Endothelial cell of umbilical vein (primary cell): ENCODE measurements at regions of chr10 and their contacts with region 1.

Region 1: DNA sequence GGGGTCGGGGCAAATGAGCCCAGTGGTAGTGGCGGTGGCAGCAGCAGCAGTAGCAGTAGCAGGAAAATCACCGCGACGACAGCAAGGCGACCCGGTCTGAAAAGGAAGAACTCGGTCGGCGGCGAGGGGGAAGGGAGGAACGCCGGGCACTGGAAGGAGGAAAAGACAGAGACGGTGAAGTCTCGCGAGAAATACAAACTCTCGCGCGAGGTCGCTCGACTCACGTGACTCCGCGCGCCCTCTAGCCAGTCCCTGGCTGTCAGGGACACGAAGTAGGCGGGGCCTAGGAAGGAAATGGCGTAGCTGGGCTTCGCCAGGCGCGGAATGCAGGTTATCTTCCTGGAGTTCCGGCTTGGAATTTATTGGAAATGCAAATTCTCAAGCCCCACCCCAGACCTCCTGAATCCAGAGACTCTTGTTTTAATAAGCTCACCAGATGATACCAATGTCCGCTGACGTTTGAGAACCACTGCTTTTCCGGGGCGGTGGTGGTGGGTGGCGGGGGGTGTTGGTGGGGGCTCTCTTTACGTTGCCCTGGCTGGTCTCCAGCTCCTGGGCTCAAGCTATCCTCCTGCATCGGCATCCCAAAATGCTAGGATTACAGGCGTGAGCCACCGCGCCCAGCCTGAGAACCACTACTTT is at the start of gene SMNDC1:
- DNase-seq: peak; percentile 99
- H3K4me3 ChIP-seq: peak within 1 kb of the TSS; percentile 95 to 99 (median 99)
- H3K27ac ChIP-seq: peak within 1 kb of the TSS; percentile 97
- H3K4me1 ChIP-seq: peaks cover 47% of the 10 kb centered on the region
- H3K27me3 ChIP-seq: no peaks in the 10 kb centered on the region
- CTCF ChIP-seq: no peak
- POLR2A ChIP-seq: peak; percentile 51
- total RNA-seq, gene SMNDC1: 38.5 and 39.3 TPM in 2 replicates

Region 2: GRCh38 chr10:109706026-109706560 is 598.8 kb before region 1 on chr10:
- CTCF ChIA-PET with region 1: no interaction called
- POLR2A ChIA-PET with region 1: no interaction called
- dilution Hi-C with region 1: no loop called
- intact Hi-C with region 1: no loop called
- DNase-seq: no peak
- H3K4me3 ChIP-seq: no peak overlapping the region
- H3K27ac ChIP-seq: no peak overlapping the region
- H3K4me1 ChIP-seq: no peaks in the 10 kb centered on the region
- H3K27me3 ChIP-seq: no peaks in the 10 kb centered on the region
- CTCF ChIP-seq: no peak
- POLR2A ChIP-seq: no peak

Region 3: DNA sequence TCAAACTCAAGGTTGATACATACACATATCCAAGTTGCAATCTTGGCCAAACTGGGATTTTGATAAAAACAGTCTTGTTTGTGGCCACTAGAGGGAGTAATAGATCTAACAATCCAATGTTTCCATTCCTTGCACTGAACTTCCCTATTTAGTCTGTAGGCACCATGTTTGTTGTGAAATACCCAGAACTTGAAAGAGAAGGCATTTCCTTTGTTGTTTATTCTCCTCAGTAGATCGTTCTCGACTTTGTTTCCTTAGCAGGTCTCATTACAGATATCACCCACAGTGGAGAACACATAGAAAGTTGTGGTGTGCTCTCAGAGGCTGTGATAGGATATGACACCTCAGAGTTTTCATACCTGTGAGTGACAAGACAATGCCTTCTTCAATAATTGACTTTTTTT is 167.8 kb before region 1 on chr10:
- CTCF ChIA-PET with region 1: interaction called, 5 read pairs
- POLR2A ChIA-PET with region 1: no interaction called
- dilution Hi-C with region 1: no loop called
- intact Hi-C with region 1: loop called (anchors 1 kb)
- DNase-seq: peak; percentile 74
- H3K4me3 ChIP-seq: no peak overlapping the region
- H3K27ac ChIP-seq: no peak overlapping the region
- H3K4me1 ChIP-seq: peaks cover 14% of the 10 kb centered on the region
- H3K27me3 ChIP-seq: no peaks in the 10 kb centered on the region
- CTCF ChIP-seq: peak; percentile 49 to 53
- POLR2A ChIP-seq: no peak

Region 4: DNA sequence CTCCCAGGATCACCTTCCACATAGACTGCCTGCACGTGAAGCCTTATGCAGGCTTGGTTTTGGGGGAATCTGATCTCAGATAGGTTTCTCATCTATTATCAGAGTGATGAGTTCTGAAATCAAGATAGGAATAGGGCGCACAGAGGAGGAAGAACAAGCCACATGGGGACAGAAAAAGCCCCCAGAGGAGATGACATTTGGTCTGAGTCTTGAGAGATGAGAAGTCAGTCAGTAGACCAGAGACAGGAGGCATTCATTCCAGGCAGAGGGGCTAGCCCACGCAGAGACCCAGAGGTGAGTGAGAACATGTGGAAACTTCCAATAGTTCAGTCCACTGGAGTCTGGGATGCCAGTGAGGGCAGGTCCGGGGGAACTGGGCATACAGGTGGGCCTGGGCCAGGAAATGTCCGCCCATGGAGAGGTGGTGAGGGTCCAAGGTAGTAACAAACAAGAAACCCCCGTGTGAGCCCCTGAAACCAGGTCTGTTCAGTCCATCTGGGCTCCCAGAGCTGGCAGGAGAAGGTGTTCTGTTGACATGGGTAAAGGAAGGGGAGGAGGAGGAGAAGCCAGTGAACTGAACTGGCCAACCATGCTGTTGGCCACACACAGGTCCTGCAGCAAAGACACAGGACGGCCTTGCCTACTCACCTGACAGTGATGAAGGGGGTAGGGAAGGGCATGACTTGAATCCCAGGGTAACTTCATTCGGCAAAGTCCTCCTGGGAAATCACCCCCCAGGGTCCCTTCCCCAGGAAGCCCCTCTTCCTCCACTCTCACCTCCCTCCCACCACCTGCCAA is 69.2 kb after region 1 on chr10:
- CTCF ChIA-PET with region 1: no interaction called
- POLR2A ChIA-PET with region 1: no interaction called
- dilution Hi-C with region 1: no loop called
- intact Hi-C with region 1: no loop called
- DNase-seq: no peak
- H3K4me3 ChIP-seq: no peak overlapping the region
- H3K27ac ChIP-seq: no peak overlapping the region
- H3K4me1 ChIP-seq: peaks cover 22% of the 10 kb centered on the region
- H3K27me3 ChIP-seq: no peaks in the 10 kb centered on the region
- CTCF ChIP-seq: no peak
- POLR2A ChIP-seq: no peak

Region 5: DNA sequence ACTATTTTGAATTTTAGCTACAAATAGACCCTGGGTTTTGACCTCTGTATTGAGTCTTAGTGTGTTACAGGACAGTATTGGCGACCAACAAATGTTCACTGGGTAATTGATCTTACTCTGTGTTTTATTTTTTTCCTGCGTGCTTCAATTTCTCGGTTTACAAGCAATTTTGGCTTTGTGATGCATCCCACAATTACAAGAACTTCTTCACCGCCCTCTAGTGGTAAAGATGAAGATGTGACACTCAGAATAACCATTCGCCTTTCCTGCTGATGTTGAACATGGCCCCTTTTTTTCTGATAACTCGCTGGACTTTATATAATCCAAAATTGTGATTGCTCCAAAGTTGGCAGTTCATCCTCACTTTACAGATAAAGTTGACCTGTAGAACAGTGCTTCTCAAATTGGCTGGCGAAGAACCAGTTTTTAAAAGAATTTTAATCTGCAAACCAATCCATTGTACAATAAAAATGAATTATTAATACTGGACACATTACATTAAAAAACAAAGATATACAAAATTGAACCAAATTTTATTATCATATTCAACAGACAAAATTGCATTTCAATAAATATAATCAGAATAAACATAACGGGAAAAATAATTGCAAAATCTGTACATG is 242.3 kb after region 1 on chr10:
- CTCF ChIA-PET with region 1: interaction called, 49 read pairs
- POLR2A ChIA-PET with region 1: interaction called, 3 read pairs
- dilution Hi-C with region 1: no loop called
- intact Hi-C with region 1: loop called (anchors 1 kb)
- DNase-seq: peak; percentile 61
- H3K4me3 ChIP-seq: no peak overlapping the region
- H3K27ac ChIP-seq: no peak overlapping the region
- H3K4me1 ChIP-seq: peaks cover 13% of the 10 kb centered on the region
- H3K27me3 ChIP-seq: peaks cover 1 to 4% of the 10 kb centered on the region in 2 experiments
- CTCF ChIP-seq: peak; percentile 63 to 68
- POLR2A ChIP-seq: no peak

Region 6: DNA sequence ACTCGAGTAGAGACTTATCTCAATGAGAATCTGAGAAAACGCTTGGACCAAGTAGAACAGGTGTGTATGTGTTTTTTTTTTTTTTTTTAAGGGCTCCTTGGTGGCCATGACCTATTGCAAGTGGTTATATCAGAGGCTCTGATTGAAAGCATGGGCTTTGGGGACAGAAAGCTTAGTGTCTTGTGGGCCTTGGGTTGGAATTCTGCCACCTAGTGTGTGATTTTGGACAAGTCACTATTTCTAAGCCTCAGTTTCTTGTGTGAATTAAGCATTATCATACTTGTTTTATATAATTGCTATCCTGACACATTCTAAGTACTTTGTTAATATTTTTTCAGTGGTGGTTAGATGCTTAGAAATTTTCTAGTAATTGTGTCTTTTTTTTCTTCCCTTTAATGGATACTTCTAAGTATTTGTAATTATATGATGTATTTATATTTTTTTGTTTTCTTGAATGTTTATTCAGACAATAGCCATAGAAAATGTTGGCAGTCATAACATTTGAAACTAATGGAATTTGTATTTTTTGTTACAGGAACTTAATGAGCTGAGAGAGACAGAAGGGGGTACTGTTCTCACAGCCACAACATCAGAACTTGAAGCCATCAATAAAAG is 295.7 kb after region 1 on chr10:
- CTCF ChIA-PET with region 1: interaction called, 80 read pairs
- POLR2A ChIA-PET with region 1: no interaction called
- dilution Hi-C with region 1: no loop called
- intact Hi-C with region 1: loop called (anchors 1 kb)
- DNase-seq: peak; percentile 80
- H3K4me3 ChIP-seq: no peak overlapping the region
- H3K27ac ChIP-seq: no peak overlapping the region
- H3K4me1 ChIP-seq: peaks cover 6% of the 10 kb centered on the region
- H3K27me3 ChIP-seq: no peaks in the 10 kb centered on the region
- CTCF ChIP-seq: peak; percentile 42 to 59
- POLR2A ChIP-seq: no peak

Region 7: DNA sequence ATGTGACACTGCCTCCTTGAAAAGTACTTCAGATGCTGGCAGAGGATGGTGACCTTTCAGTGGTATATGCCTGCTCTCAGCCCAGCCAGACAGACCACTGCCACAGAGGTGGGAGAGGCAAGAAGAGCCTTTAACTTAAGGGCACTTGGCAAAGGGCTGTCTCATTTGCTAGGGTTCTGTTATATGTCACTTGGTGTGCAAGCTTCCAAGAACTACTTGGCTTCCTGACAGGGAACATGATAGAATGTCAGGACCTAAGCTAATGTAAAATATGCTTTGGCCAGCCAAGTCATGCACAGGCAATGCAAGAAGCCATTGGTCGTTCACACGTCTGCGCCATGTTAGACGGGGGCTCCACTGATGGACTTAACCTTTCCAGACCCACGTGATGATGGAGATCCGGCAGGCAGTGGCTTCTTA is 393.9 kb after region 1 on chr10:
- CTCF ChIA-PET with region 1: no interaction called
- POLR2A ChIA-PET with region 1: no interaction called
- dilution Hi-C with region 1: no loop called
- intact Hi-C with region 1: no loop called
- DNase-seq: no peak
- H3K4me3 ChIP-seq: no peak overlapping the region
- H3K27ac ChIP-seq: no peak overlapping the region
- H3K4me1 ChIP-seq: no peaks in the 10 kb centered on the region
- H3K27me3 ChIP-seq: peaks cover 0 to 5% of the 10 kb centered on the region in 2 experiments
- CTCF ChIP-seq: no peak
- POLR2A ChIP-seq: no peak

Region 8: GRCh38 chr10:110871298-110872084 is 566.6 kb after region 1 on chr10 and contains the start of gene PDCD4:
- CTCF ChIA-PET with region 1: no interaction called
- POLR2A ChIA-PET with region 1: no interaction called
- dilution Hi-C with region 1: no loop called
- intact Hi-C with region 1: loop called (anchors 5 kb)
- DNase-seq: peak; percentile 99
- H3K4me3 ChIP-seq: peak within 1 kb of the TSS; percentile 55 to 96 (median 85)
- H3K27ac ChIP-seq: peak within 1 kb of the TSS; percentile 57
- H3K4me1 ChIP-seq: peaks cover 21% of the 10 kb centered on the region
- H3K27me3 ChIP-seq: peaks cover 5 to 7% of the 10 kb centered on the region in 2 experiments
- CTCF ChIP-seq: no peak
- POLR2A ChIP-seq: peak; percentile 80
- total RNA-seq, gene PDCD4: 46.1 and 47.9 TPM in 2 replicates

Region 9: DNA sequence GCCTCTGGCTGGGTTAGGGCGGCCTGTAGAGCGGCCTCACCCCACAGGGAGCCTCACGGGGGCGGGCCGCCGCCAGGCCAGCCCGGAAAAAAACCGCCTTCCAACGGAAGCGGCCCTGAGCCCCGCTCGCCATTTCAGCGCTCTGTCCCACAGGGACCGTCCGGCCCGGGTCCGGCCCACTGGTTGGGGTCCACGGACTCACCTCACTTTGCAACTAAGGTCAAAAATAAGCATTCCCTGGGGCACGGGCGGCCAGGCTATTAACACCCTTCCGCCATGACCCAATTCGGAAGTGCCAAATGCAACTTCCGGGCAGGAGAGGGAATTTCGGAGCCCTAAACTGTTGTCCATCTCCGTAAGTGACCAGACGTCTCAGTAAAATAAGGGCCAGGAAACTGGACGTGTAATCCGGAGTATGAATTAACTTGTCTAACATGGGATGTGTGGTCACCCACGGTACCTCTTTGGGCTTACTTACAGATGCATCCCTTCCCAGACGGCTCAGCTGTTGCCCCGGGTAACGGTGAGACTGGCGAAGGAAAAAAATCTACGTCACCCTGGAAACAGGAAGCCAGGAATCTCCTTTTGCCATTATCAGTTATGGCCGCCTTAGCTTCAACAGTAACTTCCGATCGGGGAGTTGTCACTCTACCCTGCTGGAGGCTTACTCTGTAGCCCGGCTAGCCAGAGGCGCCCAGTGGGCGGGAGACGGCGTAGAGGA is 613.9 kb after region 1 on chr10 and contains the start of gene BBIP1:
- CTCF ChIA-PET with region 1: interaction called, 3 read pairs
- POLR2A ChIA-PET with region 1: interaction called, 10 read pairs
- dilution Hi-C with region 1: no loop called
- intact Hi-C with region 1: loop called (anchors 1 kb)
- DNase-seq: peak; percentile 100
- H3K4me3 ChIP-seq: peak within 1 kb of the TSS; percentile 89 to 94 (median 93)
- H3K27ac ChIP-seq: peak within 1 kb of the TSS; percentile 98
- H3K4me1 ChIP-seq: peaks cover 20% of the 10 kb centered on the region
- H3K27me3 ChIP-seq: no peaks in the 10 kb centered on the region
- CTCF ChIP-seq: no peak
- POLR2A ChIP-seq: peak; percentile 91
- total RNA-seq, gene BBIP1: 32.8 and 34.9 TPM in 2 replicates